SK-N-SH (cell line): ENCODE measurements at regions of chr12 and their contacts with region 1.

Region 1: DNA sequence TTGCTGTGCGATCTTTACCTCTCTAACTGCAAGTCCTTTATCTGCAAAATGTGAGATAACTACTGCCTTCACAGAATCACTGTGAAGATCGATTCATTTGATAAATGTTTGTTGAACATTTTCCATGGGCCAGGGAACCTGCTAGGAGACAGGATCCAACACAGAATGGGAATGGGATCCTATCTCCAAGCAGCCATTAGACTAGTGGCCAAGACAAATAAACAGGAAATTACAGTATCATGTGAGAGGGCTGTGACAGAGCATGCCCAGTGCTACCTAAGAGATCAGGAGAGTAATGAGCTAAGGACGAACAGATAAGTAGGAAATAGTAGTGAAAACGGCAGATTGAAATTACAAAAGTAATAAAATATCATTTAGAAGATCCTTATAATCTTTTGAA is 105.7 kb downstream of the GRIN2B start:
- DNase-seq: no peak
- H3K4me3 ChIP-seq: no peak overlapping the region
- H3K27ac ChIP-seq: no peak overlapping the region
- H3K4me1 ChIP-seq: no peaks in the 10 kb centered on the region
- H3K27me3 ChIP-seq: no peaks in the 10 kb centered on the region; the same call in 1 of the 2 replicates
- CTCF ChIP-seq: no peak
- EP300 ChIP-seq: no peak
- RAD21 ChIP-seq: no peak

Region 2: DNA sequence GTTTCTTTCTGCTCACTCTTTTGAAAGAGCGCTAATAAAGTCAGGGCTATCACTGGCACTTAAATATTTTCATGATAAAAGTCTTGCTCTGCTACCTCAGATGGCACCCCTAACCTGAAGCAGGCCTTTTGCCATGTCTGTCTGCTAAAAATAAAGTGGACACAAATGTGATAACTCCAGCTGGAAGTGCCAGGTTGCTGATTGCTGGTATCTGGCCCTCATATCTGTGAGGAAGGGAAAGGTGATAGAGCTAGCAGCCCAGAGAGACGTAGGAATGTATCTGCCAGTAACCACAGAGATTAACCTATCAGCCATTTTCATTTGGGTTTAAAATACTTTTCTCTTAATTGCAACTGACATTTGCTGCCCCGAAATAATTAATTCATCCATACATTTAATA is 22.3 kb before region 1 on chr12:
- CTCF ChIA-PET with region 1: no interaction called
- POLR2A ChIA-PET with region 1: no interaction called
- DNase-seq: no peak
- H3K4me3 ChIP-seq: no peak overlapping the region
- H3K27ac ChIP-seq: no peak overlapping the region
- H3K4me1 ChIP-seq: no peaks in the 10 kb centered on the region
- H3K27me3 ChIP-seq: 0 out of 2 replicates have a peak, but pooled peaks cover 7% of the 10 kb centered on the region
- CTCF ChIP-seq: no peak
- EP300 ChIP-seq: no peak
- RAD21 ChIP-seq: no peak

Region 3: DNA sequence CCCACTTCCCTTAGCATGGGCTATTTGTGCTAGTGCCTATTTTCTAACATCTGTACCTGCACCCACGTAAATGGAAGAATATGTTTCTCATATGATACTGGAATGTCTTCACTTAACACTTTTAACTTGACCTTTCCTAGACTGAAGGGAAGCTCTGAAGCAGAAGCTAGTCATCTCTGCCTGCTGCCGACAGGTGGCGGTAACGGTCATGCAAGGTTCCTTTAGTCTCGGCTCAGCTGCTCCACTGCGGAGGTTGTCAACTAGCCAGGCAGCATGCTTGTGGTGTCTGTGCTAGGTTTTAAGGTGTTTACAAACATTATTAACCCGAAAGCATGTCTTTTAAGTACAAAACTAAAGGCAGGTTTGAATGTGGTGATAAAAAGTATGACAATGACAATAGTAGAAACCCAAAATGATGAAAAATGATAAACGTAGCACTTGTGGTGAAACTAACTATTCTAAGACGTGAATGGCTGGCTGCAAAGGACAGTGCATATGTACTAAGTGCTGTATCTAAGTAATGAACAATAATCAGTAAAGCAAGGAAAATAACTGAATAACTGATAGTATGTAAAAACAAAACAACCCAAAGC is 11.6 kb before region 1 on chr12:
- CTCF ChIA-PET with region 1: interaction called, 10 read pairs
- POLR2A ChIA-PET with region 1: no interaction called
- DNase-seq: peak; percentile 46
- H3K4me3 ChIP-seq: no peak overlapping the region; a peak in 1 of 4 replicates
- H3K27ac ChIP-seq: no peak overlapping the region
- H3K4me1 ChIP-seq: no peaks in the 10 kb centered on the region
- H3K27me3 ChIP-seq: peaks cover 12% of the 10 kb centered on the region
- CTCF ChIP-seq: peak; percentile 95
- EP300 ChIP-seq: no peak
- RAD21 ChIP-seq: peak; percentile 65

Region 4: GRCh38 chr12:13896063-13896626 is 20.4 kb after region 1 on chr12:
- CTCF ChIA-PET with region 1: no interaction called
- POLR2A ChIA-PET with region 1: no interaction called
- DNase-seq: no peak
- H3K4me3 ChIP-seq: no peak overlapping the region
- H3K27ac ChIP-seq: no peak overlapping the region
- H3K4me1 ChIP-seq: no peaks in the 10 kb centered on the region
- H3K27me3 ChIP-seq: no peaks in the 10 kb centered on the region
- CTCF ChIP-seq: no peak
- EP300 ChIP-seq: no peak
- RAD21 ChIP-seq: no peak